Activated CD4-positive, alpha-beta memory T cell treated with anti-CD3 and anti-CD28 coated beads for 36 hours (primary cell): ENCODE measurements at regions of chr11 and their contacts with region 1.

Region 1: DNA sequence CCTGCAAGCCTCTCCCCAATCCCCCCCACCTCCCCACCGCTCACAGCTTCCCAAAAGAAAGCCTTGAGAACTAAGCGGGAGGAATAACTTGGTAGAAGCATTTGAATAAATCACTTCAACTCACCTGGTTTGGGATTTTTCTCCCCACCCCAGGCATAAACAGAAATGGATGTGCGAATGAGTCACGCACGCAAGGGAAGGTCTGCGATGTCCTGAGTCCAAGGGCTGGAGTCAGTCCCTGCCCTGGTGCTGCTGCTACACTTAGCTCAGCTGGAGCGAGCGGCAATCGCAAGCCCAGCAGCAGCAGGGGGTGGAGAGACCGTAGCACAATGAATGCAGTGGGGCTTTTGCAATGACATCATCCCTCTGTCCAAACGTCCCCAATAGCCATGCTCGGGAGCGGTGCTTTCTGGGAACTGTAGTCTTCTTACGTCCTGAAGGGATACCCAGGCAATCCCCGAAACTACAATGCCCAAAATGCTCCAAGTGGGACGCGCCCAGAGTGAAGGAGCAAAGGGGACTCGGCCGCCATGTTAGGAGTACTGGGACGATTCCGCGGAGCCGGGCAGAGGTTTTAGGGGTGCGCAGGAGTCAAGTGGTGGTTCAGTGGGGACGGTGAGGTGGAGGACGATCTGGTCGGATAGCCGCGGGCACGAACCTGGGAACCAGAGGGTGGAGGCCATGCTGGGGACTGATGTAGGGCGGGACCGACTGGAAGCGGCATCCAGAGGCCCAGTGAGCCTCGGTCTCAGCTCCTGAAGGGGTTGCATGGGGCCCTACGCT is at the start of gene RAB30:
- DNase-seq: peak; percentile 96
- H3K4me3 Mint-ChIP-seq: no peak within 1 kb of the TSS
- H3K27ac Mint-ChIP-seq: no peak within 1 kb of the TSS
- H3K4me1 Mint-ChIP-seq: peaks cover 29% of the 10 kb centered on the region
- H3K27me3 Mint-ChIP-seq: no peaks in the 10 kb centered on the region
- total RNA-seq, gene RAB30: 11.5 to 12.9 TPM

Region 2: GRCh38 chr11:82927254-82927880 is 144.4 kb before region 1 on chr11:
- CTCF ChIA-PET with region 1: interaction called, 3 read pairs
- POLR2A ChIA-PET with region 1: interaction called, 3 read pairs
- intact Hi-C with region 1: loop called (anchors 5 kb)
- DNase-seq: no peak
- H3K4me3 Mint-ChIP-seq: no peak overlapping the region
- H3K27ac Mint-ChIP-seq: no peak overlapping the region
- H3K4me1 Mint-ChIP-seq: peaks cover 14% of the 10 kb centered on the region
- H3K27me3 Mint-ChIP-seq: no peaks in the 10 kb centered on the region

Region 3: DNA sequence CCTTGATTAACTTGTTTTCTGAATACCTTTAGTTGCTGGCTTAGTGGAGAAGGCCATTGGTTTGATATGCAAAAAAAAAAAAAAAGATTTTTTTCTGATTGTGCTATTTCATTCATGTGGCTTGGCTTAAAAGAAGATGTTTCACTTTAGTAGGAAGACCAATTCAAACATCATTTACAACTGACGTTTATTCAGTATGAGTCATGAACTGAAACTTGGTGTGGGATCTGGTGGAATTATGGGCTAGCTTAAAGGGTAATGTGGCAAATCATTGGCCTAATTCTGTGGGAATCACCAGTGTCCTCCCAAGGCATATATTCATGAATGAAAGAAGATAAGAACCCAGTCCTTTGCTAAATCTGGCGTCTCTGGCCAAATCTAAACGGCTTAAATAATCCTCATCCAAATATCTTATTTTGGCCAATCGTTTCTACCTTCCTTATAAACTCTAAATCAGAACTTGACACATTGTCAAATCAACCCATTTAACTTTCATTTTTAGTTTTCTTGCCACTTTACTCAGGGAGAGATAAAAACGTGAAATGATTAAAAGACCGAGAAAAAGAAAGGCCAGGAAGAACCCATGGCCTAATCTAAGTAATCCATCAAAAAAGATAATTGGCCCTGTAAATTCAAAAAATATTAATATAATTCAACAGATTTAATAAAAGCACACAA is 93.2 kb before region 1 on chr11:
- CTCF ChIA-PET with region 1: no interaction called
- POLR2A ChIA-PET with region 1: no interaction called
- intact Hi-C with region 1: loop called (anchors 1 kb)
- DNase-seq: no peak
- H3K4me3 Mint-ChIP-seq: no peak overlapping the region
- H3K27ac Mint-ChIP-seq: peak overlapping the region; percentile 16
- H3K4me1 Mint-ChIP-seq: peaks cover 38% of the 10 kb centered on the region
- H3K27me3 Mint-ChIP-seq: no peaks in the 10 kb centered on the region

Region 4: DNA sequence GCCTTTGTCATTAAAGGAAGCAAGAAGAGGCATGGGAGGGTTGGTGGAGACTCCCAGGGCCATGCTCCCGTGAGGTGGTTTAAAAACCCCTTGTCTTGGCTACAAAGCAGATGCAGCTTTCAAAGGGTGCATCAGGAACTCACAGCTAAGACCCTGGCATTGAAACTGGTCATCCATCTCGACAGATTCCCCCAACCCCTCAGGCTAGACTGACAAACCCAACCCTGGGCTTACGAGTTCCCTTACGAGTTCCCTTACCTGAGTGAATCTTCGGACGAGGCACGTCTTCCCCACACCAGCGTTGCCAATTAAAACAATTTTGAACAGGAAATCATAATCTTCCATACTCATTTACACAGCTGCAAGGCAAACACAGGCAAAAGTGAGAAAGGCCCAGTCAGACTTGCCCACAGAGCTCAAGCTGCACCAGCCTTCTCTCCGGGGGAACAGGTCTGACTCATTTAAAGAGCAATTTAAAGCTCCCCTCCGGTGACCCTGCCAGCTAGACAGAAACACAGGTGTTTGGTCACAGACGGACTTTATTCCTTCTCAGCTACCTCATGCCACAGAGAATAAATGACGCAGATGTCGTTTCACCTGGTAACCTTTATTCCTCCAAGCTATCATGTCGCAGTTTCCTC is 74.7 kb before region 1 on chr11:
- CTCF ChIA-PET with region 1: no interaction called
- POLR2A ChIA-PET with region 1: interaction called, 3 read pairs
- intact Hi-C with region 1: loop called (anchors 1 kb)
- DNase-seq: peak; percentile 67
- H3K4me3 Mint-ChIP-seq: no peak overlapping the region
- H3K27ac Mint-ChIP-seq: peak overlapping the region; percentile 43
- H3K4me1 Mint-ChIP-seq: peaks cover 60% of the 10 kb centered on the region
- H3K27me3 Mint-ChIP-seq: no peaks in the 10 kb centered on the region

Region 5: GRCh38 chr11:83116015-83116641 is 44.4 kb after region 1 on chr11:
- CTCF ChIA-PET with region 1: no interaction called
- POLR2A ChIA-PET with region 1: no interaction called
- intact Hi-C with region 1: loop called (anchors 2 kb)
- DNase-seq: no peak
- H3K4me3 Mint-ChIP-seq: no peak overlapping the region
- H3K27ac Mint-ChIP-seq: no peak overlapping the region
- H3K4me1 Mint-ChIP-seq: peaks cover 44% of the 10 kb centered on the region
- H3K27me3 Mint-ChIP-seq: no peaks in the 10 kb centered on the region

Region 6: DNA sequence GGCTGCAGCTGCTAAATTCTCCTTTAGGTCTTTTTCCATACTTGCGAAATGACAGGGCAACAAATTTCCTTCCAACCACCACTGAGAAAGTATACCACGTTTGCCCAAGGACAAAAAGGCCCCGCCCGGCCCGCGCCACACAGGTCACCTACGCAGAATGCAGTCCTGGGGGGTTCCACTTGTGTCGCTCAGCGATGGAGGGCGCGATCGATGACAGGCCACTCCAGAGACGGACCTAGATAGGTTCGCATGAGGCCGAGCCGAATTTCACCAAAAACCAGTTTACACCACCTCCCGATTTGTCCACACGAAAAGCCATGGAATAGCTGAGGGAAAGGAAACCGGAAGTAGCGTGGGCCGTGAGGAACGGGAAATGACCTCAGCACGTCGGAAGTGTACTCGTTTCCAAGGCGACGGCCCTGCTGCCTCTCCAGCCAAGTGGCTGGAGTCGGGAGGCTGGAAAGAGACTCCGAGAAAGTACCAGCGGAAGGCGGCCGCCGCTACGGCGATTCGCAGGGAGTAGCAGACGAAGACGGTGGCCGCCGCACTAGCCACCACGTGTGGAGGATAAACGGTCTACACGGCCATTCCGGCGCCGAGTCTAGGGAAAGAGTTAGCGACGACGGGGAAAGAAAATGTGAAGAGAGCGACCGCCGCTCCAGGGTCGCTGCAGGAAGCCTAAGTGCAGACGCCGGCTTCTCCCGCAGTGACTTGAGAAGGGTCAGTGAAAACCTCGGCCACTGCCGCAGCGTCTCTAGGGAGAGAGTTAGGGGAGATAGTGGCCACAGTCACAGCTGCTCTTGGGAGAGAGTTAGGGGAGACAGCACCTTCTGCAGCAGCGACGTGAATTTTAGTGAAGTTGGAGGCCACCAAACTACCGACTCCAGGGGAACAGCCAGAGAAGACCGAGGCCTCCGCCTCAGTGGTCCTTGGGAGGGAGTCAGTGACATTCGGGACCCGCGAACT is 121.8 kb after region 1 on chr11 and contains the start of gene ANKRD42:
- CTCF ChIA-PET with region 1: interaction called, 3 read pairs
- POLR2A ChIA-PET with region 1: interaction called, 5 read pairs
- intact Hi-C with region 1: loop called (anchors 1 kb)
- DNase-seq: peak; percentile 93
- H3K4me3 Mint-ChIP-seq: peak within 1 kb of the TSS; percentile 99
- H3K27ac Mint-ChIP-seq: peak within 1 kb of the TSS; percentile 98
- H3K4me1 Mint-ChIP-seq: peaks cover 38% of the 10 kb centered on the region
- H3K27me3 Mint-ChIP-seq: no peaks in the 10 kb centered on the region
- total RNA-seq, gene ANKRD42: 3.8 to 5.4 TPM

Region 7: GRCh38 chr11:83285771-83286528 is 214.2 kb after region 1 on chr11 and contains the start of gene CCDC90B:
- CTCF ChIA-PET with region 1: no interaction called
- POLR2A ChIA-PET with region 1: interaction called, 3 read pairs
- intact Hi-C with region 1: loop called (anchors 1 kb)
- DNase-seq: peak; percentile 96
- H3K4me3 Mint-ChIP-seq: peak within 1 kb of the TSS; percentile 92
- H3K27ac Mint-ChIP-seq: peak within 1 kb of the TSS; percentile 99
- H3K4me1 Mint-ChIP-seq: peaks cover 35% of the 10 kb centered on the region
- H3K27me3 Mint-ChIP-seq: no peaks in the 10 kb centered on the region
- total RNA-seq, gene CCDC90B: 29.2 to 32.3 TPM